HAP-1 (cell line): ENCODE measurements at regions of chr1 and their contacts with region 1.

Region 1: GRCh38 chr1:205523891-205524793 is 19.7 kb downstream of the CDK18 start:
- DNase-seq: peak; percentile 54 to 87
- H3K4me3 ChIP-seq: no peak overlapping the region
- H3K4me1 ChIP-seq: peaks cover 18% of the 10 kb centered on the region
- H3K27me3 ChIP-seq: no peaks in the 10 kb centered on the region

Region 2: GRCh38 chr1:205335643-205336091 is 188.5 kb before region 1 on chr1:
- in situ Hi-C with region 1: loop called (anchors 5 kb)
- DNase-seq: peak; percentile 73 to 92
- H3K4me3 ChIP-seq: no peak overlapping the region
- H3K4me1 ChIP-seq: no peaks in the 10 kb centered on the region; the same call in 1 of the 2 replicates
- H3K27me3 ChIP-seq: no peaks in the 10 kb centered on the region

Region 3: GRCh38 chr1:205396967-205397616 is 127.0 kb before region 1 on chr1:
- in situ Hi-C with region 1: loop called (anchors 5 kb)
- DNase-seq: peak; percentile 72 to 89
- H3K4me3 ChIP-seq: no peak overlapping the region
- H3K4me1 ChIP-seq: peaks cover 4% of the 10 kb centered on the region; the same call in 1 of the 2 replicates
- H3K27me3 ChIP-seq: peaks cover 2% of the 10 kb centered on the region; the same call in 1 of the 2 replicates